ENCODE measurements at regions of chr11 and their contacts with region 1.

Region 1: DNA sequence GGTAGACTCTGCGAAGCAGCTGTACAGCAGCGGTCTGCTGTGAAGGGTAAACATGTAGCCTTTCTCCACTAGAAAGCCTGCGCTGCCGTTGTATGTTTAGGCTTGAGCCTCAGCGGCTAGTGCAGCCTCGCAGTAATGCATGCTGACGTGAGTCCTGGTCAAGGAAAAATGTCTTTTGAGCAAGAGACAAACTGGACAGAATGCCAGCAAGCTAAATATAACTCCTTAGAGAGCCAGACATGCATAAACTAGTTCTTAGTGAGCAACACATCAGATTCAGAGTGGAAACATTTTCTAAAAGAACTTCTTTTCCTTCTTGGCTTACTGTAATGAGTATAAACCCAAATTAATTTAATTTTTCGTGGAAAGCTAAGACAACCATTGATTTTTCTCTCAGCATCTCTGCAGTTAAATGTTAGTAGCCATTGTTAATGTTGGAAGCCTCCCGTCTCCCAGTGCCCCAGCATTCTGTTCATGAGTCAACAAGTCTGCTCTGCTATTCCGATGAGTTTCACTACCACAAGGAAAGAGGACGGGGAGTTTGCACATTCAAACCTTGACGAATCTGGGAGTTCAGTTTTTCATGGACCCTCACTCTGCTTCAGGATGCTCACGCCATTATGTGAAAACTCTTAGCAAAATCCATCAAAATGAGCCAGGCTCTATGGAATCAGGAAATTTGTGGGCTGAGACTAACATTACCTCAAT is 51.4 kb downstream of the JAM3 start:
- DNase-seq: peak in 7 of 10 donors; percentile 43 to 92 (median 65)

Region 2: DNA sequence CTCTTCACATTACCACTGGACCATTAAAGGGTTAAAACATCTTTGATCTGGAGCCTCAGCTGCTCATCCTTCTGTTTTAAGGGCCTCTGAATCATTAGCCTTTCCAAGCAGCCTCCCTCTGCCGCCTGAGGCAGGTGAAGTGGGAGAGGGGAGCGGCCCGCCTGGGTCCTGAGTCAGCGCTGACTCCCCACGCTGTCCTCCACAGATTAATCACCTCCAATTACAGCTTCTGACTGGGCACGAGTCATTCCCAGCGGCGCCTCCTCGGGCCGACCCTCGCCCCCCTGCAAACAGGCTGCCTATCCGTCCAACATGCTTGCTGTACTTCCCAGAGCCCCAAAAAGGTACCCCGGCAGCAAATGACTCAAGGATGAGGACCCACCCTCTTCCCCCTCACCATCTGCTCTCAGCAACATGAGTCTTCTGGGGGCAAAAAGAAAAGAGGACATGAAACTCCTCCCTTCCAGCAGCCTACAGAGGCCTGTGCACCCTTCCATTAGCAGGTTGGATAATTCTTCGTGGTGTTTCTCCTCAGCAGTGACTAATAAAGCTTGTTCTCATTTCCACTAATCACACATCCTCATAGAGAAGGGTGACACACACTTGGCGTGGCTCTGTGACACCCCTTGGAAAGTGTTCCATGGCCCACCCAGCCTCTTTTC is 95.7 kb before region 1 on chr11:
- intact Hi-C with region 1: no loop called
- DNase-seq: peak in 3 of 10 donors; percentile 28 to 69 (median 66)

Region 3: GRCh38 chr11:134068829-134069425 is 51.4 kb before region 1 on chr11 and contains the start of gene JAM3:
- intact Hi-C with region 1: loop called (anchors 2 kb)
- DNase-seq: peak; percentile 97 to 100 (median 98)

Region 4: GRCh38 chr11:134253188-134253993 is 133.1 kb after region 1 on chr11 and contains the starts of genes ACAD8 and THYN1:
- intact Hi-C with region 1: no loop called
- DNase-seq: peak; percentile 96 to 100 (median 98)